Endothelial cell of umbilical vein (primary cell): ENCODE measurements at regions of chr12 and their contacts with region 1.

Region 1: GRCh38 chr12:92745856-92746540 is 43.2 kb downstream of the PLEKHG7 start:
- DNase-seq: peak; percentile 99
- H3K4me3 ChIP-seq: no peak overlapping the region
- H3K27ac ChIP-seq: peak overlapping the region; percentile 93
- H3K4me1 ChIP-seq: peaks cover 25% of the 10 kb centered on the region
- H3K27me3 ChIP-seq: no peaks in the 10 kb centered on the region
- CTCF ChIP-seq: no peak
- POLR2A ChIP-seq: peak; percentile 48

Region 2: DNA sequence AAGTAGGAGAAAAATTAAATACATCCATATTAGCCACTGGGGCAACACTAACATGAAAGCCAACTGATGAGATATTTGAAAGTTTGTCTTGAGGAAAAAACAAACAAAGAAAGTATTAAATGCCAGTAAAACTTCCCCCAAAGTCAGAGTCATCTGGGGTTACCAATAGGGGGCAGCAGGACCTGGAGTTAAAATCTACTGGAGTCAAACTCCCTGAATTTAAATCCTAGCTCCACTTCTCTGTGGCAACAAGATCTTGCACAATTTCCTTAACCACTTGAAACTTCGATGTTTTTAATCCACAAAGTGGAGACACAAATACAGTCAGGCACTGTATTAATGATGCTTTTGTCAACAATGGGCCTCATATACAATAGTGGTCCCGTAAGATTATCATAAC is 28.8 kb before region 1 on chr12:
- CTCF ChIA-PET with region 1: interaction called, 11 read pairs
- POLR2A ChIA-PET with region 1: no interaction called
- dilution Hi-C with region 1: no loop called
- intact Hi-C with region 1: no loop called
- DNase-seq: peak; percentile 64
- H3K4me3 ChIP-seq: no peak overlapping the region
- H3K27ac ChIP-seq: no peak overlapping the region
- H3K4me1 ChIP-seq: no peaks in the 10 kb centered on the region
- H3K27me3 ChIP-seq: no peaks in the 10 kb centered on the region
- CTCF ChIP-seq: peak; percentile 45 to 52
- POLR2A ChIP-seq: no peak

Region 3: DNA sequence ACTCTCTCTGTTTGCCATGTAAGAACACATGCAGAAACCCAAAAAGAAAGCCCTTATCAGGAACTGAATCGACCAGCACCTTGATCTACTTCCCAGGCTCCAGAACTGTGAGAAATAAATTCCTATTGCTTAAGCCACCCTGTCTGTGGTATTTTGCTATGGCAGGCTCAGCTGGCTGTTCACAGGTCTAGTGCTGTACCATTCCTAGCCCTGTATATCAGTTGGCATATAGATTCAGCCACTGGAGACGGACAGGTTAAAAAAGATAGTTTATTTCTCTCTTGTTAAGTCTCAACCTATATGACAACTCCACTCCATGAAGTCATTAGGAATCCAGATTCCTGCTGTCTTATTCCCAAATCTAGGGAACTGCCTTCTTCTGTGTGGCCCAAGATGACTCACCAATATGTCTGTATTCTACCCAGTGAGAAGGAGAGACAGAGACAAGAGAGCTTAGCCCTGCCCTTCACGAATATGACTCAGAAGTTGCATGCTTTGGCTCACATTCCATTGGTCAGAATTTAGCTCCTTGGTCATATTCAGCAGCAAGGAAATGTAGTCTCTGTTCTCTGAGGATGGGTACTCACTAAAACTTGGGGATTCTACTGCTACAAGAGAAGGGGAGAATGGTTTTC is 13.8 kb after region 1 on chr12:
- CTCF ChIA-PET with region 1: interaction called, 9 read pairs
- POLR2A ChIA-PET with region 1: no interaction called
- dilution Hi-C with region 1: no loop called
- intact Hi-C with region 1: loop called (anchors 1 kb)
- DNase-seq: peak; percentile 36
- H3K4me3 ChIP-seq: no peak overlapping the region
- H3K27ac ChIP-seq: no peak overlapping the region
- H3K4me1 ChIP-seq: peaks cover 13% of the 10 kb centered on the region
- H3K27me3 ChIP-seq: no peaks in the 10 kb centered on the region
- CTCF ChIP-seq: no peak
- POLR2A ChIP-seq: no peak

Region 4: GRCh38 chr12:92769124-92769901 is 23.3 kb after region 1 on chr12:
- CTCF ChIA-PET with region 1: interaction called, 5 read pairs
- POLR2A ChIA-PET with region 1: no interaction called
- dilution Hi-C with region 1: no loop called
- intact Hi-C with region 1: loop called (anchors 1 kb)
- DNase-seq: peak; percentile 91
- H3K4me3 ChIP-seq: no peak overlapping the region
- H3K27ac ChIP-seq: peak overlapping the region; percentile 61
- H3K4me1 ChIP-seq: peaks cover 28% of the 10 kb centered on the region
- H3K27me3 ChIP-seq: no peaks in the 10 kb centered on the region
- CTCF ChIP-seq: no peak
- POLR2A ChIP-seq: peak; percentile 43

Region 5: GRCh38 chr12:92779902-92780301 is 33.9 kb after region 1 on chr12:
- CTCF ChIA-PET with region 1: no interaction called
- POLR2A ChIA-PET with region 1: no interaction called
- dilution Hi-C with region 1: no loop called
- intact Hi-C with region 1: loop called (anchors 2 kb)
- DNase-seq: no peak
- H3K4me3 ChIP-seq: no peak overlapping the region
- H3K27ac ChIP-seq: no peak overlapping the region
- H3K4me1 ChIP-seq: peaks cover 4% of the 10 kb centered on the region
- H3K27me3 ChIP-seq: no peaks in the 10 kb centered on the region
- CTCF ChIP-seq: no peak
- POLR2A ChIP-seq: no peak